CD8-positive, alpha-beta T cell (primary cell): ENCODE measurements at regions of chr2 and their contacts with region 1.

Region 1: DNA sequence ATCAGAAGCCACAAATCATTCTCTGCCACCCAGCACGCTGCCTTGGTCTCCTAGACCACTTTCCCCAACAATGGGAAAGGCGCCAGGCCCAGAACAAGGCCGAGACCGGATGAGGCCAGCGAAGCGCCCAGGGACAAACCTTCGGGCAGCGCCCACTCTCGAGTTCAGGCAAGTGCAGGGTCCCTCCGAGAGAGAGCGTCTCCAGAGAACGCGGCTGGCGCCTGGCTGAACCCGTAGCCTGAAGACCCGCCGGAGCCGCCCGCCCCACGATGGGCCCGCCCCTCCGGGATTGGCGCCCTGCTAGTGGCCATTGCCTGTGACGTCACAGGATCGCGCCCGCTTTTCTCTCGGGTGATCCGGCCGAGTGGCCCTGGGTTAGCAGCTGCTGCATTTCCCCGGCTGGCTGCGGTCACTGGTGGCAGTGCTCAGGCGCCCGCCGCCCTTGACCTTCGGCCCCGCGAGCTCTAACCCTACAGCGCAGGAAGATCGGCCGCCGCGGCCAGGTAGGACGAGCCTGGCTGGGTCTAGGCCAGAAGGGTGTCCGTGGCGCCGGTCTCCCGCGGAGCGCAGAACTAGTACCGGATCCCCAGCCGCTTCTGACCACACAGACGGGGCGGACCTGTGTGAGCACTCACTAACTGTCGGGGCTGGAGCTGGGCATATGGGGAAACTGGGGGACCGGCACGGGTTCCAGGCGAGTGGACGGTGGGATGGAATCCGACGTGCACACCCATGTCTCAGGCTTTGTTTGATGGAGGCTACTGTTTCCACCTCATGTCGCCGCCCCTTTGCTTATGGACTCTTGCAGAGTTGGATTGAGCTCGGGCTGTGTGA is at the start of gene FAHD2A:
- DNase-seq: peak; percentile 82 to 96 (median 93)
- ATAC-seq: peak; percentile 94
- H3K4me3 ChIP-seq: peak within 1 kb of the TSS; percentile 71 to 98
- H3K4me3 Mint-ChIP-seq: peak within 1 kb of the TSS; percentile 98
- H3K27ac ChIP-seq: peak within 1 kb of the TSS; percentile 61 to 75
- H3K27ac Mint-ChIP-seq: peak within 1 kb of the TSS; percentile 94
- H3K4me1 ChIP-seq: peaks cover 16% of the 10 kb centered on the region
- H3K4me1 Mint-ChIP-seq: peaks cover 27% of the 10 kb centered on the region
- H3K27me3 ChIP-seq: no peaks in the 10 kb centered on the region
- H3K27me3 Mint-ChIP-seq: no peaks in the 10 kb centered on the region
- CTCF ChIP-seq: no peak
- total RNA-seq, gene FAHD2A: 25.5 to 26.3 TPM

Region 2: DNA sequence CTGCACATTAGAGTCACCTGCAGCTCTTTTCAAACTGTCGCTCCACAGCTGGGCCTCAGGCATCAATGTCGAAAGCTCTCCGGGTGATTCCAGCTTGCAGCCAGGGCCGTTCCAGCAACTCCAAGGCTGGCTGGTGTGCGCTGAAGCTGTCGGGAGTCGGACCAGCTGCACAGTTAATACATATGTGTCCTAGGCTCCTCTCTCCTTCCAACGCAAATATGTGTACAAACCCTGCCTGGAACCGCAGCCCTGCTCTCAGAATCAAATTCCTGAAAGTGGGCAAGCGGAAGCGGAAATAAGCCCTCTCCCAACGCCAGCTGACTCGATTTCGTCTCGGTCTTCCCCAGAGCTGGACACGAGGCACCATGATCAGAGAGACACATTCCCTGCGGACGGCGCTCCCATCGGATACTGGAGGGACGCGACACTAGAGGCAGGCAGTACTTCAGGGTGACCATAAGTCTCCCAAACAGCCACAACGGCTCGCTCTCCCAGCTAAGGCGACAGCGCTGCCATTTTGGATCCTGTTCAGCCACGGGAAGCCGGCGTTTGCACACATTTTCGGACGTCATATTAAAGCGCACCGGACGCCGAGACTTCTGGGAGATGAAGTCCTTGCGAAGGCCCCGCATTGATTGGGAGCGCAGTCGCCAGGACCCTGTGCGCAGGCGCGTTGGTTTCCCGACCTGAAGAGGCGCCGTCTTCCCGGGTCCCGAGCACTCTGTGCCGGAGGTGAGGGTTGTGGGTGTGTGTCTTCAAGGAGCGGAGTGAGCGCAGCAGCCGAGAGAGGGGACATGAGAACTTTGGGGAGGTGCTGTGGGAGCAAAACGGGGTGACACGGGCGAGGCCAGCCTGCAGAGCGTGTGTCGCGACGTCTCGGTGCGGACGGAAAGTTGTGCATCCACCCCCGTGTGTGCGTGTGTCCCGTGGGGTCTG is 237.2 kb before region 1 on chr2 and contains the start of gene ZNF2:
- CTCF ChIA-PET with region 1: no interaction called
- POLR2A ChIA-PET with region 1: interaction called, 11 read pairs
- intact Hi-C with region 1: loop called in 1 of 2 experiments (anchors 1 kb)
- DNase-seq: peak; percentile 91 to 99 (median 98)
- ATAC-seq: peak; percentile 94
- H3K4me3 ChIP-seq: peak within 1 kb of the TSS; percentile 98
- H3K4me3 Mint-ChIP-seq: peak within 1 kb of the TSS; percentile 99
- H3K27ac ChIP-seq: peak within 1 kb of the TSS; percentile 90 to 96
- H3K27ac Mint-ChIP-seq: peak within 1 kb of the TSS; percentile 96
- H3K4me1 ChIP-seq: peaks cover 18% of the 10 kb centered on the region
- H3K4me1 Mint-ChIP-seq: peaks cover 41% of the 10 kb centered on the region
- H3K27me3 ChIP-seq: no peaks in the 10 kb centered on the region
- H3K27me3 Mint-ChIP-seq: no peaks in the 10 kb centered on the region
- CTCF ChIP-seq: no peak
- total RNA-seq, gene ZNF2: 0.25 to 0.27 TPM